PC-3 (cell line): ENCODE measurements at regions of chr4 and their contacts with region 1.

Region 1: GRCh38 chr4:67871867-67872266 is 11.9 kb downstream of the TMPRSS11D start:
- DNase-seq: peak; percentile 85
- ATAC-seq: peak; percentile 92
- H3K4me3 ChIP-seq: no peak overlapping the region
- H3K27ac ChIP-seq: no peak overlapping the region
- H3K4me1 ChIP-seq: no peaks in the 10 kb centered on the region
- H3K27me3 ChIP-seq: no peaks in the 10 kb centered on the region
- CTCF ChIP-seq: peak; percentile 88

Region 2: DNA sequence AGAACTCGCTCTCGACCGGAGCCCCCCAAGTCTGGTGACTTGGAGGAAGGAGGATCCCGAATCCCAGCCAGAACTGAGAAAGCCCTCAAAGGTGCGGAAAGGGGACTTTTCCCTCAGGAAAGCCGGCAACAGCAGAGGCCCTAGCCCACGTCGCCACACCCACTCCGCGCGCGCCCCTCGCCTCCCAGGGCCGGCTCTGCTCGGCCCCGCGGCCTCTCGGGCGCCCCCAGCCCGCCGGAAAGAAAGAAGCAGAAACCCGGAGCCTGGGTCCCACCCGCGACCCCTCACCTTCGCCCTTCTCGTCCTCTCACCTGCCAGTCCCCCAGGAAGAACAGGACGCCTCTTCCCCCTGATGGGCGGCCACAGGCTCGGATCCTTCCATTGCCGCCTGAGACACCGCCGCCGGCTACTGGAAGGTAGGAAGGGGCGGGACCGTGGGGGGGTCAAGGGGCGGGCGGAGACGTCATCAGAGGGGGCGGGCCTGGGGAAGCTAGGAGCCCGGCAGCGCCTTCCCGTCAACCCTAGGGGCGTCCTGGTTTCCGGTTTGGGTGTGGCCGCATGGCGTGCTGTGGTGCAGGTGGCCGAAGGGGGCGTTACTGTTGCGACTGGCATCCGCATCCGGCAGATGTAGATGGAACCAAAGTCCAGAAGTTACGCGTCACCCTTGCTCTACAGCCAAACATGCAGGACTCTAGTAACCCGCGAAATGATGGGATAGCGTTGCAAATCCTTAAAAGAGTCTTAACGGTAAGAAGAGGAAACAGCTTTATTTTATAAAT is 170.9 kb before region 1 on chr4 and contains the start of gene UBA6:
- CTCF ChIA-PET with region 1: interaction called, 5 read pairs
- POLR2A ChIA-PET with region 1: no interaction called
- intact Hi-C with region 1: loop called (anchors 5 kb)
- DNase-seq: peak; percentile 99
- ATAC-seq: peak; percentile 94
- H3K4me3 ChIP-seq: peak within 1 kb of the TSS; percentile 86
- H3K27ac ChIP-seq: peak within 1 kb of the TSS; percentile 78
- H3K4me1 ChIP-seq: peaks cover 32% of the 10 kb centered on the region
- H3K27me3 ChIP-seq: no peaks in the 10 kb centered on the region
- CTCF ChIP-seq: peak; percentile 64
- total RNA-seq, gene UBA6: 94.6 and 107 TPM in 2 replicates

Region 3: GRCh38 chr4:67746797-67747495 is 124.9 kb before region 1 on chr4:
- CTCF ChIA-PET with region 1: interaction called, 3 read pairs
- POLR2A ChIA-PET with region 1: no interaction called
- intact Hi-C with region 1: loop called (anchors 5 kb)
- DNase-seq: peak; percentile 78
- ATAC-seq: no peak; the same call in 1 of the 2 replicates
- H3K4me3 ChIP-seq: no peak overlapping the region
- H3K27ac ChIP-seq: no peak overlapping the region
- H3K4me1 ChIP-seq: peaks cover 11% of the 10 kb centered on the region
- H3K27me3 ChIP-seq: no peaks in the 10 kb centered on the region
- CTCF ChIP-seq: peak; percentile 81

Region 4: GRCh38 chr4:67790721-67791120 is 81.1 kb before region 1 on chr4:
- CTCF ChIA-PET with region 1: no interaction called
- POLR2A ChIA-PET with region 1: no interaction called
- intact Hi-C with region 1: no loop called
- DNase-seq: no peak
- ATAC-seq: no peak
- H3K4me3 ChIP-seq: no peak overlapping the region
- H3K27ac ChIP-seq: no peak overlapping the region
- H3K4me1 ChIP-seq: peaks cover 2% of the 10 kb centered on the region; the same call in 1 of the 2 replicates
- H3K27me3 ChIP-seq: no peaks in the 10 kb centered on the region
- CTCF ChIP-seq: no peak

Region 5: DNA sequence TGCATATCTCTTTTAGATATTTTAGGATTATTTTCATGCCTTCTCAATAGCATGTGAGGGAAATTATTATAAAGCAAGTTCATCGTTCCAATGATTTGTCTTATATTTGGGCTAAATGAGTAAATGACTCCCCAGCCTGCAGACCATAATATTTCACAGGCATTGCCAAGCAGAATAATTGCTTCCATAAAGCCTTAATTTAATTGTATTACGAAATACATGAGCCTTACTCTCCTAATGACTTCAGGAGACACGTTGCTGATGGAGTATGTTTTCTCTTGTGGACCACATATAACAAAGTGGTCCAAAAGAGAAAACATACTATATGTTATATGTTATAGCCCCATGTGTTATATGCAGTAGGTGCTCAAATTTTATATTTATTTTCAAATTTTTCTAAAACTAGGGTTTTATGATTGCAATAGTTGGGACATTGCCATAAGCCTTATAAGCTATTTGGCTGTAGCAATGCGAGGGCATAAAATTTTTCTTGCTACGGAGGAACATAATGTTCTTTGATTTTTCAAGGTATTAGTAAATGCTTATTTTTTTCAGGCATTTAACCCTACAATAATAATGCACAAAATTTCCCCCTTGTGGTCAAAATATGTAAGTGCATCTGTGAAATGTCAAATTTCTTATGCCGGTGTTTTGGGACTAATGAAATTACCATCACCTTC is 38.2 kb after region 1 on chr4:
- CTCF ChIA-PET with region 1: no interaction called
- POLR2A ChIA-PET with region 1: no interaction called
- intact Hi-C with region 1: loop called (anchors 1 kb)
- DNase-seq: peak; percentile 70
- ATAC-seq: peak; percentile 53
- H3K4me3 ChIP-seq: no peak overlapping the region
- H3K27ac ChIP-seq: no peak overlapping the region
- H3K4me1 ChIP-seq: no peaks in the 10 kb centered on the region
- H3K27me3 ChIP-seq: no peaks in the 10 kb centered on the region
- CTCF ChIP-seq: peak; percentile 84

Region 6: GRCh38 chr4:67922697-67923096 is 50.8 kb after region 1 on chr4:
- CTCF ChIA-PET with region 1: no interaction called
- POLR2A ChIA-PET with region 1: no interaction called
- intact Hi-C with region 1: no loop called
- DNase-seq: no peak
- ATAC-seq: no peak
- H3K4me3 ChIP-seq: no peak overlapping the region
- H3K27ac ChIP-seq: no peak overlapping the region
- H3K4me1 ChIP-seq: no peaks in the 10 kb centered on the region
- H3K27me3 ChIP-seq: no peaks in the 10 kb centered on the region
- CTCF ChIP-seq: no peak

Region 7: GRCh38 chr4:67988991-67989390 is 117.1 kb after region 1 on chr4:
- CTCF ChIA-PET with region 1: no interaction called
- POLR2A ChIA-PET with region 1: no interaction called
- intact Hi-C with region 1: loop called (anchors 2 kb)
- DNase-seq: no peak
- ATAC-seq: no peak
- H3K4me3 ChIP-seq: no peak overlapping the region
- H3K27ac ChIP-seq: no peak overlapping the region
- H3K4me1 ChIP-seq: peaks cover 3% of the 10 kb centered on the region; the same call in 1 of the 2 replicates
- H3K27me3 ChIP-seq: peaks cover 34% of the 10 kb centered on the region; the same call in 1 of the 2 replicates
- CTCF ChIP-seq: no peak

Region 8: GRCh38 chr4:68175562-68176155 is 303.8 kb after region 1 on chr4:
- CTCF ChIA-PET with region 1: no interaction called
- POLR2A ChIA-PET with region 1: no interaction called
- intact Hi-C with region 1: loop called (anchors 1 kb)
- DNase-seq: peak; percentile 86
- ATAC-seq: peak; percentile 83
- H3K4me3 ChIP-seq: no peak overlapping the region
- H3K27ac ChIP-seq: no peak overlapping the region
- H3K4me1 ChIP-seq: peaks cover 2% of the 10 kb centered on the region
- H3K27me3 ChIP-seq: peaks cover 4% of the 10 kb centered on the region; the same call in 1 of the 2 replicates
- CTCF ChIP-seq: peak; percentile 97